ENCODE measurements at regions of chr3 and their contacts with region 1.

Region 1: GRCh38 chr3:27134165-27134796 is 234.9 kb downstream of the NEK10 start:
- DNase-seq: peak; percentile 73 to 78
- H3K4me3 ChIP-seq: no peak overlapping the region
- H3K4me1 ChIP-seq: no peaks in the 10 kb centered on the region; the same call in 1 of the 2 replicates
- H3K27me3 ChIP-seq: peaks cover 5% of the 10 kb centered on the region; the same call in 1 of the 2 replicates

Region 2: GRCh38 chr3:27279123-27279522 is 144.8 kb after region 1 on chr3:
- in situ Hi-C with region 1: loop called (anchors 10 kb)
- DNase-seq: peak; percentile 38 to 45
- H3K4me3 ChIP-seq: no peak overlapping the region
- H3K4me1 ChIP-seq: peaks cover 3% of the 10 kb centered on the region
- H3K27me3 ChIP-seq: no peaks in the 10 kb centered on the region

Region 3: GRCh38 chr3:29144807-29145206 is 2010.5 kb after region 1 on chr3:
- in situ Hi-C with region 1: no loop called
- DNase-seq: peak in 1 of 2 experiments; percentile 40
- H3K4me3 ChIP-seq: no peak overlapping the region
- H3K4me1 ChIP-seq: peaks cover 24% of the 10 kb centered on the region
- H3K27me3 ChIP-seq: no peaks in the 10 kb centered on the region

Measured in HAP-1 (cell line).